ENCODE measurements at regions of chr14 and their contacts with region 1.

Region 1: DNA sequence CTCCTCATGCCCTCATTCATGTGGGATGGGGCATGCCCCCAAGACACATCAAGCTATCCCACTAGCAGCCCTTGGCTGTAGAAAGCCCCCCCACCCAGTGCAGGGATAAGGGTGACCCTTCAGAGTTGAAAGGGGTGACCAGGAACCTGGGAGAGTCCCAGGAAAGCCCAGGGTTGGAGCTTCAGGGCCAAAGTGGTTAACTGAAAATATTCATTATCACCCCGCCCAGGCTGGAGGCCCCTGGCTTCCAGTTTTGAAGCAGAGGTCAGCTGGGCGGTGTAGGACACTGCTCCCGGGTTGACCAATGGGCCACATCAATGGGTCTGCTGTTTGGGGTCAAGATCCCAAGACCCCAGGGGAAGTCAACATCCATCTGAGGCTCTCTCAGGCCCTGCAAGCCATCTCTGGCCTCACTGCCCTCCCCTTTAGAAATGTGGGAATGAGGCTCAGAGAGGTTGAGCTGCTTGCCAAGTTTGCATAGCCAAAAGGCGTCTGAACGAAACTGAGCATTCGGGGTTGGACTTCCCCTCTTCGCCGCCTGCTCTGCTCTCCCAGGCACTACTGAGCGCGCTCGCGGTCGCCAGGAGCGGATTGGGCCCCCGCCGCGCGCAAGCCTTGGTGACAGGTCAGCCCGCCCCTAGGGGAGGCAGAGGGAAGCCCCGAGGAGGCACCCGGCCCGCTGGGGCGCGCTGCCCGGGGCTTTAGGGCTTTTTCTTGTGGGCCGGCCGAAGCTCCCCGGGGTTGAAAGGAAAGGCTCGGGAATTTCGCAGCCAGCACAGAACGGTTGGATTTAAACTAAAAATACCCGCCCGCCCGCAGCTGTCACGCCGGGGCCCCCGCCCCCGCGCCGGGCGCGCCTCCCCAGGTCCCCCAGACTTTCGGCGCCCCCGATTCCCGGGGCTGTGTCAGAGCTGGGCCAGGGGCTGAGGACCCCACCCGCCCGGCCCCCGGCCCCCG is 576 bp downstream of the SYNE3 start:
- DNase-seq: peak; percentile 90

Region 2: GRCh38 chr14:95314616-95315482 is 201.0 kb before region 1 on chr14:
- intact Hi-C with region 1: no loop called
- DNase-seq: no peak

Region 3: DNA sequence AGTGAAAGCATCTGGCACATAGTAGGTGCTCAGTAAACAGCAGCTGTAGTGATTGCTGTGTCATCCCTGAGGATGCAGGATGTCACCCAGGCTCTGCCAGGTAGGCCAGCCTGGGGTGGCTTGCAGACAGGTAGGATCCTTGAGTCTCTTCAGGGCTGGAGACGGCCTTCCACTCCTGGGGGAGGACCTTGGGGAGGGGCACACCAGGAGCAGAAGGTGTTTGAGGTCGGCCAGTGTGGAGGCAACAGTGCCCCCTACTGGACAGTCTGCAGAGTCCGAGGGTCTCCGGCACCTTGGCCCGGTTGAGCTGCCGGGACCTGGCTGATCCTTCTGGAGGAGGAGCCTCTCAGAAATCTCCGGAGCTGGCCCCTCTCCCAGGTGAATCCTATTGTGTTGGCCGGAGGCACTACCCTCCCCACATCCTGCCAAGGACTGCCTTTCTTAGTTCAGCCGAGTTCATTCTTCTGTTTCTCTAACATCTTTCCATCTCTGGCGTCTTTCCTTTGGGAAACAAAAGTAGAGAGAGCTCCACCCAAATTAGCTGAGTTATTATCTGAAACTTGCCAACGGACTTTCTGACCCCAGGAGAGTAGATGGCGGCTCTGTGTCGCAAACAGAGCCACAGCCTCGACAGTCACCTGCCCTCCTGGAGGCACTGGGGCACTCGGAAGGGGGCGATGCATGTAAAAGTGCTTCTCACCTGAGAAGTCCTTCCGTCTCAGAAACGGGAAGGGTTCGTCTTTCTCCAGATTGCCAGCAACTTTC is 154.3 kb before region 1 on chr14:
- intact Hi-C with region 1: no loop called
- DNase-seq: no peak

Region 4: DNA sequence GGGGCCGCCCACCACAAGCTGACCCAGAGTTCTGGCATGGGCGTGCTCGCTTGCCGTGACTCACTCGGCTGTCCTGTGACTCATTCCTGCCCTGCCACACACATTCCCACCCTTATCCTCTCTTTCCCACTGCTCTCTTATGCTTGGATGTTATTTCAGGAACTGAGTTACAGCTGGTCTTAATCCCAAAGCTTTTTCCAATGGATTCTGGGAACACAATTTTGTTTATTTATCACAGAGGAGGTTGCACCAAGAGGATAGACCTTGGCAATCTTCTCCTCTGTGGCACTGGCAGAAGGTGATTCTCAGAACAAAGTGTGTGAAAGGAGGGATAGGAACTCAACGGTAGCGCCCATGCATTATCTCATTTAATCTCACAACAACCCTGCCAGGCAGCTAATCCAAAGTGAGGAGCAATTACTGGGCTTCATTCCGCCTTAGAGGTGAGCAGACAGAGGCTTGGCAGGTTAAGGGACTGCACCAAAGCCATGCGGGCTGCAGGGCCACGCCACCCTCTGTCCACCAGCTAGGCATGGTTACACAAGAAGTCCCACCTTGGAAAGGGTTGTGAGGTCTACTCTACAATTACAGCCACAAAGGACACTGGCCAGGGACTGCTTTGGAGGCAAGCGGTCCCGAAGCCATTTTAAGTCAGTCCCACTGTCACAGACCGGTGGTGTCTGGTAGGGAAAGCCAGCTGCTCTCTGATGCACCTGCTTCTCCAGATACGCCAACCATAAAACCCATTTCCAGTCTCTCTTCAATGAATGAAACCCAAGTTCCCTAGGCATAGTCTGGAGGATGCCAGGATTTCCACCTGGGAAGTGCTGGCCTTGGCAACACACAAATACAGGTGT is 32.3 kb before region 1 on chr14:
- intact Hi-C with region 1: loop called (anchors 5 kb)
- DNase-seq: peak; percentile 89